Heart left ventricle (tissue), 16 donors: ENCODE measurements at regions of chr1 and their contacts with region 1.

Region 1: DNA sequence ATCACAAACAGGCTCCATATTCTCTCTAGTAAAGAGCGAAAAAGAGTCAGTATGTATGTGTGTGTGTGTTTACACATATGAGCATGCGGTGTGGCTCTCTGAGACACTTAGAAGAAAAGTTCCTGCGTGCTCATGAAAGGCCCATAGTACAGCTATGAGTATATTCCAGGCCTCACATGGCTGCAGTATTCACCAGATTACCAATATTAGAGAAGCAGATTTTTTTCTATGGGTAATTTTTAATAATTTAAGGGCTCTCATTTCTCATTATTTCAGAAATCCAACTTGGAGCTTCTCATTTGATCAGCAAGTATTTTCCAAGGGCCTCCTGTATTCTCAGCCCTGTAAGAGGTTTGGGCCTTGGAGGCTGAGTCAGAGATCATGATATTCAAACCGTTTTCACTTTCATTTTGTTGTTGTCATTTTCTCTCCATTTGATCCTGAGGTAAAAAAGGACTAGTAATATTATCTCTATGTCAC is 232.9 kb upstream of the SGIP1 start:
- DNase-seq: no peak
- ATAC-seq: peak in 3 of 4 donors; percentile 53 to 73 (median 64)
- H3K4me3 ChIP-seq: peak overlapping the region in 9 of 12 donors; percentile 0 to 39 (median 27)
- H3K27ac ChIP-seq: peak overlapping the region in 11 of 12 donors; percentile 15 to 78 (median 45)
- H3K4me1 ChIP-seq: peaks cover 0 to 42% (median 6%) of the 10 kb centered on the region in 12 donors
- H3K27me3 ChIP-seq: no peaks in the 10 kb centered on the region
- CTCF ChIP-seq: no peak
- POLR2A ChIP-seq: no peak

Region 2: GRCh38 chr1:65799601-65800000 is 501.4 kb before region 1 on chr1:
- intact Hi-C with region 1: no loop called
- DNase-seq: no peak
- ATAC-seq: no peak
- H3K4me3 ChIP-seq: no peak overlapping the region
- H3K27ac ChIP-seq: no peak overlapping the region
- H3K4me1 ChIP-seq: peaks cover 0 to 8% (median 0%) of the 10 kb centered on the region in 12 donors
- H3K27me3 ChIP-seq: peaks cover 0 to 31% (median 4%) of the 10 kb centered on the region in 9 donors
- CTCF ChIP-seq: no peak
- POLR2A ChIP-seq: no peak

Region 3: GRCh38 chr1:66168948-66169671 is 131.9 kb before region 1 on chr1:
- intact Hi-C with region 1: no loop called
- DNase-seq: no peak
- ATAC-seq: no peak
- H3K4me3 ChIP-seq: no peak overlapping the region
- H3K27ac ChIP-seq: no peak overlapping the region
- H3K4me1 ChIP-seq: peaks cover 0 to 5% (median 0%) of the 10 kb centered on the region in 12 donors
- H3K27me3 ChIP-seq: no peaks in the 10 kb centered on the region
- CTCF ChIP-seq: no peak
- POLR2A ChIP-seq: no peak

Region 4: GRCh38 chr1:66253330-66253921 is 47.6 kb before region 1 on chr1:
- intact Hi-C with region 1: no loop called
- DNase-seq: peak in 1 of 5 donors; percentile 23
- ATAC-seq: peak; percentile 88 to 94 (median 92)
- H3K4me3 ChIP-seq: no peak overlapping the region
- H3K27ac ChIP-seq: no peak overlapping the region
- H3K4me1 ChIP-seq: peaks cover 0 to 25% (median 0%) of the 10 kb centered on the region in 12 donors
- H3K27me3 ChIP-seq: no peaks in the 10 kb centered on the region
- CTCF ChIP-seq: peak; percentile 72 to 93 (median 87)
- POLR2A ChIP-seq: no peak

Region 5: DNA sequence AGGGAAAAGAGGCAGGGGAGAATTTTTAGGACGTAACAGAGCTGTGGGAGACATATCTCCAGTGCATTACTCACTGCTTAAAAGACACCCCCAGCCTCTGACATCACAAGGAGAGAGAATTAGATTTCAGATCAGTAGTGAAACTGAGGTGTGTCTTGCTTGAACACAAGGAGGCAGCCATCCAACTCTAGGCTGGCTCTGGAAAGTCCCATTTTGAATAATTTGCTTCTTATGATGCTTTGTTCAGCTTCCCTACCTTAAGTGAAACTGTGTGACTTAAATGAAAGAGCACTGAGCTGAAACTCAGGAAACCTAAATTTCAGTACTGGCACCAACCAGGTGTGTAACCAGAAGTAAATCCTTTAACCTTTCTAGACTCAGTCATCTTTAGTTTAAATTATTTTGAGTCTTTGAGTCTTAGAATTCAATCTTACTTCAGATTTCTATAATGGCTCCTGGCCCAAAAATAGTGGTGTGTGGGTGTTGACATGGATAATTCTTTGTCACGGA is 18.6 kb before region 1 on chr1:
- intact Hi-C with region 1: loop called in 1 of 10 experiments (anchors 2 kb)
- DNase-seq: peak in 1 of 5 donors; percentile 28
- ATAC-seq: peak in 3 of 4 donors; percentile 41 to 81 (median 77)
- H3K4me3 ChIP-seq: no peak overlapping the region
- H3K27ac ChIP-seq: peak overlapping the region in 5 of 12 donors; percentile 7 to 78 (median 61)
- H3K4me1 ChIP-seq: peaks cover 0 to 59% (median 15%) of the 10 kb centered on the region in 12 donors
- H3K27me3 ChIP-seq: no peaks in the 10 kb centered on the region
- CTCF ChIP-seq: peak in 4 of 12 donors; percentile 7 to 36 (median 24)
- POLR2A ChIP-seq: no peak